ENCODE measurements at regions of chr17 and their contacts with region 1.

Region 1: DNA sequence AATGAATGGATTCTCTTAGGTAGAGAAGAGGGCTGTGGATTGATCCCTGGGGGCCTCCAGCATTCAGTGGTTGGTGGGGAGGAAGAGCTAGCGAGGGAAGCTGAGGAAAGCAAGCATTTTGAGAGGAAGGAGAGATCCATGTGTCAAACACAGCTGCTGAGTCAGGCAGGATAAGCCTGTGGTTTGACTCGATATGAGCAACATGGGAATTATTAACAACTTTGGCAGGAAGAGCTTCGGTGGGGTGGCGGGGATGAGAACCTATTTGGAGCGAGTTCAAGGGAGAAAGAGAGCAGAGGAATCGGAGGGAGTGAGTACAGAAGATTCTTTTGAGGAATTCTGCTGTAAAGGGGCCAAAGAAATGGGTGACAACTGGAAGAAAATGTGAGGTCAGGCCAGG is 59.5 kb upstream of the CDC42EP4 start:
- DNase-seq: no peak
- ATAC-seq: no peak
- H3K4me3 Mint-ChIP-seq: no peak overlapping the region
- H3K27ac Mint-ChIP-seq: no peak overlapping the region; the same call in 1 of the 2 replicates
- H3K4me1 Mint-ChIP-seq: peaks cover 8% of the 10 kb centered on the region
- H3K27me3 Mint-ChIP-seq: no peaks in the 10 kb centered on the region
- CTCF ChIP-seq: no peak

Region 2: GRCh38 chr17:73192894-73193701 is 178.2 kb before region 1 on chr17 and contains the start of gene COG1:
- CTCF ChIA-PET with region 1: interaction called, 16 read pairs
- POLR2A ChIA-PET with region 1: no interaction called
- DNase-seq: peak; percentile 82
- ATAC-seq: peak; percentile 65
- H3K4me3 Mint-ChIP-seq: peak within 1 kb of the TSS; percentile 96
- H3K27ac Mint-ChIP-seq: peak within 1 kb of the TSS; percentile 97
- H3K4me1 Mint-ChIP-seq: peaks cover 21% of the 10 kb centered on the region
- H3K27me3 Mint-ChIP-seq: no peaks in the 10 kb centered on the region
- CTCF ChIP-seq: no peak
- total RNA-seq, gene COG1: 19.2 to 22.6 TPM (median 19.5 TPM) in 3 replicates

Region 3: DNA sequence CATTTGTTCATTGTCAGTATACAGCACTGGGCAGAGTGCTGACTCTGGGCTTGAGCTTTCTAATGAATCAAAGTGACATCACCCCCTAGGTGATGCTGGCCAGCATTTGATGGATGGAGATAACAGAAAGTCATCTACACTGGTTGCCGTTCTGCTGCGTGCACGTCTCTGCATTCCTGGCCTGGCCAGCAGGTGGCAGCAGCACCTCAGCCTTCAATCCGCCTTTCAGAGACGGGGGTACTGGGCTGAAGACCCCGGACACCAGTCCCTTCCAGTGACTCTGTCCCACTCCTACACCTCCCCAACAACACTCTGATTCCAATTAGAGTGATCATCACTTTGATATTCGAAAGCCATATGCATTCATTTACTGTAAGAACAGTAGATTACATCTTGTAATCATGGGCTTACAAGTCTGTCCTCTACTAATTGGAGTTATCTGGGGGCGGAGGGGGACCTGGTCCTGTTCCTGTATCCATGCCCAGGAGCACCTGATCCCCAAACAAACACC is 115.6 kb before region 1 on chr17:
- CTCF ChIA-PET with region 1: interaction called, 143 read pairs
- POLR2A ChIA-PET with region 1: no interaction called
- DNase-seq: peak; percentile 87
- ATAC-seq: peak; percentile 87
- H3K4me3 Mint-ChIP-seq: no peak overlapping the region
- H3K27ac Mint-ChIP-seq: no peak overlapping the region
- H3K4me1 Mint-ChIP-seq: peaks cover 14% of the 10 kb centered on the region
- H3K27me3 Mint-ChIP-seq: no peaks in the 10 kb centered on the region; the same call in none of the 2 replicates
- CTCF ChIP-seq: peak; percentile 95

Region 4: DNA sequence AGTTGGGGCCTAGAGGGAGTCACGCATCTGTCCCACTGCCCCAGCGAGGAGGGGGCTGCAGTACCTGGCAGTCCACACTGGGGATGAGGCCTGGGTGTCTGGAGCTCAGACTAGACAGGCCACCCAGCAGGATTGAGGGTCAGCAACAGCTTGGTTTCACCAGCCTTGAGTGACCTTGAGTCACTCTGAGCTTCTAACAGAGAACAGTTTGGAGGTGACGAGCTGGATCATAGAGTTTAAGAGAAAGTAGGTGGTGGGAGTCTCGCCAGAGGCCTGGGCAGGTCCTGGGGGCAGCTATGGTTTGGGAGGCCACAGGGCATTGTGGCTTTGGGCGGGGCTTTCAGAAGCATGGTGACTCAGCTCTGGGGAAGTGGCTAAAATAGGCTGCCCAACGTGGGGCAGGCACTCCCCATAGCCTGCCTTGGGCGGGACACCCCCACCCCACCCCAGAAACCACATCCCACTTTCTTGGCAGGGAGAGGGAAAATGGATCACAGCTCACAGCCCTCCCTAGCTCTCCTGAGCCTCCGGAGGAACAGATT is 80.0 kb before region 1 on chr17:
- CTCF ChIA-PET with region 1: interaction called, 10 read pairs
- POLR2A ChIA-PET with region 1: no interaction called
- DNase-seq: no peak
- ATAC-seq: no peak
- H3K4me3 Mint-ChIP-seq: no peak overlapping the region
- H3K27ac Mint-ChIP-seq: no peak overlapping the region
- H3K4me1 Mint-ChIP-seq: peaks cover 19% of the 10 kb centered on the region
- H3K27me3 Mint-ChIP-seq: no peaks in the 10 kb centered on the region
- CTCF ChIP-seq: no peak

Region 5: GRCh38 chr17:73311781-73312641 is 59.3 kb before region 1 on chr17 and contains the start of gene CDC42EP4:
- CTCF ChIA-PET with region 1: interaction called, 88 read pairs
- POLR2A ChIA-PET with region 1: no interaction called
- DNase-seq: peak; percentile 96
- ATAC-seq: peak; percentile 89
- H3K4me3 Mint-ChIP-seq: peak within 1 kb of the TSS; percentile 87
- H3K27ac Mint-ChIP-seq: no peak within 1 kb of the TSS
- H3K4me1 Mint-ChIP-seq: peaks cover 33% of the 10 kb centered on the region
- H3K27me3 Mint-ChIP-seq: peaks cover 16% of the 10 kb centered on the region
- CTCF ChIP-seq: no peak
- total RNA-seq, gene CDC42EP4: 17.0 to 18.8 TPM (median 18.4 TPM) in 3 replicates

Region 6: DNA sequence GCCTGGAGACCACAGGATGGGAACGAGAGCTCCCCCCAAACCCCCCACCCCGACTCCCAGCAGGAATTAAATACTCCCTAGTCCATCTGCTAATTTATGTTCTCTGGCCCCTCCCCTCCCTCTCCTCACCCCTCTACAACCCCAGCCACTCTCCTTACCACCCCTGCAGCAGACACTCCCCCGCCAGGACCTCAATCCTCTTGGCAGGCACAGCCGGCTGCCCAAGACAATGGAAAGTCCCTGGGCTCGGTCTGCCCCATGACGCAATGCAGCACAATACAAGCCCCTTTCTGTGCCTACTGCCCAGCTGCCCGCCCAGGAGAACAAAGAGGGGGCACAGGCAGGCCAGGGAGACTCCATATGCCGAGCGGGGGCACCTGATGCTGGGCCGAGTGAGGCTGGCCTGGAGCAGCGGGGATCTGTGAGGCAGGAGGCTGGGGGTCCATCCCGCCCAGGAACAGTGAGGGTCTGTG is 29.2 kb before region 1 on chr17:
- CTCF ChIA-PET with region 1: interaction called, 16 read pairs
- POLR2A ChIA-PET with region 1: interaction called, 3 read pairs
- DNase-seq: peak; percentile 75
- ATAC-seq: peak; percentile 74
- H3K4me3 Mint-ChIP-seq: peak overlapping the region; percentile 18; the same call in 1 of the 2 replicates
- H3K27ac Mint-ChIP-seq: peak overlapping the region; percentile 83
- H3K4me1 Mint-ChIP-seq: peaks cover 48% of the 10 kb centered on the region
- H3K27me3 Mint-ChIP-seq: no peaks in the 10 kb centered on the region
- CTCF ChIP-seq: no peak

Region 7: GRCh38 chr17:73359987-73360410 is 11.3 kb before region 1 on chr17:
- CTCF ChIA-PET with region 1: interaction called, 26 read pairs
- POLR2A ChIA-PET with region 1: no interaction called
- DNase-seq: peak; percentile 81
- ATAC-seq: peak; percentile 71
- H3K4me3 Mint-ChIP-seq: peak overlapping the region; percentile 40
- H3K27ac Mint-ChIP-seq: peak overlapping the region; percentile 86
- H3K4me1 Mint-ChIP-seq: peaks cover 46% of the 10 kb centered on the region
- H3K27me3 Mint-ChIP-seq: no peaks in the 10 kb centered on the region
- CTCF ChIP-seq: no peak